Heart left ventricle (tissue), 16 donors: ENCODE measurements at regions of chr14 and their contacts with region 1.

Region 1: DNA sequence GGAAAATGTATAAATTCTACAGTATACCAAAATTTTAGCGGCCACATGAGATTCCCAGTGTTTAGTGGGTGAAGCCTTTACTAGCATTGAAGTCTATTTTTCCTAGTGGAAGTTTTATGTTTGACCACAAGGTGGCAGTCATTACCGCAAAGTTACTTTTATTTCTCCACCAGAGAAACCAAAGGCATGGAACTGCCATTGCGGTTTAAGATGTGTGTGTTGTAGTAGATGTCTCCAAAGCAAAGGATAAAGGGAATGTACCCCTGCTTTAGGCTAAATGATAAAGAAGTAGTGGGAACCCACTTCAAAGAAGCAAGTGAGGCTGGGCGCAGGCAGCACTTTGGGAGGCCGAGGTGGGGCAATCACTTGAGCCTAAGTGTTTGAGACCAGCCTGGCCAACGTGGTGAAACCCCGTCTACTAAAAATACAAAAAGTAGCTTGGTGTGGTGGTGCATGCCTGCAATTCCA is 140.5 kb downstream of the PRKCH start:
- DNase-seq: no peak
- ATAC-seq: peak; percentile 27 to 49 (median 38)
- H3K4me3 ChIP-seq: no peak overlapping the region
- H3K27ac ChIP-seq: peak overlapping the region in 4 of 12 donors; percentile 32 to 65 (median 40)
- H3K4me1 ChIP-seq: peaks cover 0 to 36% (median 27%) of the 10 kb centered on the region in 12 donors
- H3K27me3 ChIP-seq: no peaks in the 10 kb centered on the region
- CTCF ChIP-seq: peak; percentile 65 to 90 (median 81)
- POLR2A ChIP-seq: no peak

Region 2: DNA sequence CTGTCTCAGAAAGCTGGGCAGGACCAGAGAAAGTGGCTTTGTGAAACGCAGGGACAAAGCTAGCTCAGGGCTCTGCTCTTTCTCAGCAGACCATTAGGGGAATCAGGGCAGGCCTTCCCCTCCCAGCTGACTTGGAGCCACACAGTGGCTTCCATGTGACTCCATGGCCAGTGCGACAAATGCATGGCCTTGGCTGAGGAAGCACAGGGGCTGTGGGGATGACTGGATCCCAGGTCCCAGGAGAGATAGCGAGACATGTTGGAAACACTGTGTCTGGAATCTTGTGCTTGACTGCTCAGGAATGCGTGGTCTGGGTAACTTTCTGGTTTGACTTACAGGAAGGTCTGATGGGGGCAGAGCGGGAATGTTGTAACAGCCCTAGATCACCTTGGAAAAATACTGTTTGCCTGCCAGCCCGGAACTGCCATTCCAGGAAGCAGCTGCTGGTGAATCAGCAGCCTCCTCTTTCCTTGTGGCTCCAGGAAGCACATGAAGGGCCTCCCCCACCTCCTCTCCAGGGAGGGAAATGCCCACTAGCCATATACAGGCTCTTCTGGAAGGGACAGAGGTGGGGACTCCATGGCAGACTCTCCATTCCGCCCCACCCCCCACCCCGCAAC is 99.9 kb after region 1 on chr14:
- intact Hi-C with region 1: no loop called
- DNase-seq: peak; percentile 66 to 87 (median 73)
- ATAC-seq: peak; percentile 52 to 90 (median 80)
- H3K4me3 ChIP-seq: no peak overlapping the region
- H3K27ac ChIP-seq: peak overlapping the region; percentile 31 to 94 (median 76)
- H3K4me1 ChIP-seq: peaks cover 2 to 67% (median 32%) of the 10 kb centered on the region in 12 donors
- H3K27me3 ChIP-seq: no peaks in the 10 kb centered on the region
- CTCF ChIP-seq: peak in 1 of 12 donors; percentile 7
- POLR2A ChIP-seq: no peak

Region 3: DNA sequence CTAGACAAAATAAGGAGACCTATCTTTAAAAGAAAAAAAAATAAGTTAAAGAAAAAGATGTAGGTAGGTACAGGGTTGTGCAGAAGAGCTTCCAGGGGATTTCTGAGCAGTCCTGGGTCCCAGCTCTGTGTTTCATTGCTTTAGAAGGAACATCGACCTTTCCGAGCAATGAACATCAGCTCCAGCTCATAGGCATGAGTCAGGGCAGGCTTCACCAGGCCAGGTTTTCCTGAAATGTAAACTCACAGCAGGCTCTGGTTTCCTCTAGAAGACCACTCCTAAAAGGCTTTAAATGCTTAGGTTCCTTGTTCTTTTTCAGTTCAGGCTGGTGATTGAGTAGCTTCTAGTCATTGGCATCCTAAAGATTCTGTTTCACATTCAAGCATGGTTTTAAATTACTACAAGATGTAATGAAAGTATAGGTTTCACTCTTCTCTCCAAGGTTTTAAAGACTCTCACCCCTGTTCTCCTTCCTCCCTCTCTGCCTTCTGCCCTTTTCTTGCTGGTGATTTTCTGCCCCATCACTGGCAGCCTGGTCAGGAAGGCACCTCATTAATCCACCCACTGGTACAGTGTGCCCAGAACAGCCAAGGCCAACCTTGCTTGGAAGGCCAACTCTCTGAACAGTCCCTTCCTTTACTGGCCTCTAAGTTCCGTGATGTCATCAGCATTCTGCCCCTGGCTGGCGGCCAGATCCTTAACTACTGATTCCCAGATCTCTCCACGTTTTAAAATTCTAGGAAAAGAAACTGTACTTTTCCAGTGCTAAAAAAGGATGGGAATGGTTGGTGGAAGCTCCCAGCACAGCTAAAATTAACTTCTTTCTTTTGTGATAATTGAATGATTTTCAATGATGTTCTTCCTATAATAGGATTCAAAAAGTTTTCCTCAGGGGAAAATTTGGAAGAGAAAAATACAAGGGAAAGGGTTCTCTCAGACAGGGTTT is 124.0 kb after region 1 on chr14:
- intact Hi-C with region 1: loop called in 1 of 10 experiments (anchors 5 kb)
- DNase-seq: peak; percentile 78 to 84 (median 81)
- ATAC-seq: peak; percentile 83 to 89 (median 86)
- H3K4me3 ChIP-seq: no peak overlapping the region
- H3K27ac ChIP-seq: peak overlapping the region; percentile 49 to 88 (median 65)
- H3K4me1 ChIP-seq: peaks cover 8 to 71% (median 32%) of the 10 kb centered on the region in 12 donors
- H3K27me3 ChIP-seq: no peaks in the 10 kb centered on the region
- CTCF ChIP-seq: no peak
- POLR2A ChIP-seq: no peak

Region 4: DNA sequence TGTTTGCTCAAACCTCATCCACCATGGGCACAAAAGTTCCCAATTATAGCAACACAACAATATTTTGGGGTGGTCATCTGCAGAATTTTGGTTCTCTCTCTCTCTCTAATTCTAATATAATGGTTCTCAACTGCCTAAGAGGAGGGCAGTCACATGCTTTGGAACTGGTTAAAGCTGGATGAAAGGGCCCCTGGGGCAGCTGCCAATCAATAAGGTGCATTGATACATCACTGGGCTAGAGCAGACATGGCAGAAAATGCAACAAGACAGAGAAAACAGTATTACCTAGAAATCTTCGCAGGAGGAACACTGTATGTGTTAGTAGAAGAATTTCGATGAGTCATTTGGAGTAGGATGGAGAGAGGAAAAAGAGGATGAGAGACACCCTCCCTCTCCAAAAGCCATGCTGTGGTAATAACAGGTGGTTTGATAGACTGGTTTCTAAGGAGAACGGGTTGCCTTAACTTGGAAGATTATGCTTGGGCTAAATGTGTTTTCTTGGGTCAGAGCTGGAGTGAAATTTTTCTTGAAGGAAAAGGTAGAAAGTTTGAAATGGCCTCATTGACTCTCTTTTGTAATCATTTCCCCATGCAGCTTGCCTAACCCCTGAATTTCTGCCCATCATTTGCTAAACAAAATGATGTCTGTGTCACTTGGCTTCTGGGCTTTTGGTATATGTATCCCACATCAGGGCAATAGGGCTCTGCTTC is 166.3 kb after region 1 on chr14:
- intact Hi-C with region 1: no loop called
- DNase-seq: no peak
- ATAC-seq: no peak
- H3K4me3 ChIP-seq: no peak overlapping the region
- H3K27ac ChIP-seq: no peak overlapping the region
- H3K4me1 ChIP-seq: no peaks in the 10 kb centered on the region
- H3K27me3 ChIP-seq: no peaks in the 10 kb centered on the region
- CTCF ChIP-seq: no peak
- POLR2A ChIP-seq: no peak

Region 5: DNA sequence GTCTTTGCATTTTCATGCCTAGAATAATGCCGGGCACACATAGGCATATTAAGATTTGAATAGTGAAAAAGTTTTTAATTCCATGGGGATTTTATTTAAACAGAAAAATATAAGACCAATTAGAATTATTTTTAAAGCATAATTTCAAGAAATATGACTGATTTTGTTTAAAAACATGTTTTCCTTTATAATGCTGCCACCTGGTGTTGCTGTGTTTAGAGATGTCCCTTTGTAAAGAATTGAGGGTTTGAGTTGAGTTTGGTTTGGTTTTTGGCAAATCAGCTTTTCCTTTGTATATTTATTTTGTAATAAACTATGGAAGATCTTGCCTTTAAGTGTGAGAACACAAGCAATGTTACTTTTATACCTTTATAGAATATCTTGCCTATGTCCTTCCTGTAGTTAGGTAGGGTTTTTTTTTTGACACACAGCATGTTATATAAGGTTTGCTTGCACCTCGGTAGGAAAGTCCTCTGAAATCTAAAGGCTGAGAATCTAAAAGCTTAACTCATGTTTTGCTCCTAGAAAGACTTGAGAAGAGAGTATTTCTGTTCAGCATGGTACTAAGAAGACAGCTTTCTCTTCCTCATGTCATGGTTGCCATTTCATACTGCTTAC is 269.0 kb after region 1 on chr14:
- intact Hi-C with region 1: loop called (anchors 2 to 5 kb)
- DNase-seq: no peak
- ATAC-seq: no peak
- H3K4me3 ChIP-seq: no peak overlapping the region
- H3K27ac ChIP-seq: peak overlapping the region in 3 of 12 donors; percentile 18 to 44 (median 25)
- H3K4me1 ChIP-seq: peaks cover 0 to 26% (median 8%) of the 10 kb centered on the region in 12 donors
- H3K27me3 ChIP-seq: no peaks in the 10 kb centered on the region
- CTCF ChIP-seq: peak in 11 of 12 donors; percentile 26 to 71 (median 55)
- POLR2A ChIP-seq: no peak

Region 6: DNA sequence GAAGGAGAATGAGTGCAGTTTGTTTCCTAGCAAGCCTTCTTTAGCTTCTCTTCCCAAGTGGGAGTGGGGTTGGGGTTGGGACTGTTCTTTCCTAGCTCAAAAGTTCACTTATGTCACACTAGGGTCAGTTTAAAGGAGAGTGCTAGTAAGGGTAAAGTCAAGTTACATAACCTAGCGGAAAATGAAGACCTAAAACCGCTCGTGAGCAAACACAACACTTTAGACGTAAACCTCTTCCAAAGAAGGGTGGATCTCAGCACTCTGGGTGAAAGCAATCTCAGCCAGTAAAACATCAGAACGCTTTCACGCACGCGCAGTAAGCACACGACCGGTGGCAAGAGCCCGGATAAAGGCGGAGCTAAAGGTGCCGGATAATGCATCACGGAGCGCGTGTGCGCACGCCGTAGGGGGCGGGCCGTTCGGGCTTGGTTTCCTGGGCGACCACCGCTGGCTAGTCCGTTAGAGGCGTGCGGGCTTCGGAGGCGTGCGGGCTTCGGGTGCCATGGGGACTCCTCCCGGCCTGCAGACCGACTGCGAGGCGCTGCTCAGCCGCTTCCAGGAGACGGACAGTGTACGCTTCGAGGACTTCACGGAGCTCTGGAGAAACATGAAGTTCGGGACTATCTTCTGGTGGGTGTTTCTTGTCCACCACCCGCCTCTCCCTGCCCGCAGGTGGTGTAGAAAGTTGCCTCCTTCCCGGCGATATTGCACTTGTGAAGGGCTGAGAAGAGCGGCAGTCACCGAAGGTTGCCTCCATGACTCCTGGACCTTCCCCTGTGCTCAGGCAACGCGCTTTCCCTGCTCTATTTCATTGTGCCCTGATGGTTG is 300.3 kb after region 1 on chr14 and contains the start of gene SNAPC1:
- intact Hi-C with region 1: loop called in 4 of 10 experiments (anchors 2 to 10 kb)
- DNase-seq: peak; percentile 97 to 99 (median 98)
- ATAC-seq: peak; percentile 99 to 100 (median 99)
- H3K4me3 ChIP-seq: peak within 1 kb of the TSS; percentile 29 to 90 (median 80)
- H3K27ac ChIP-seq: peak within 1 kb of the TSS; percentile 78 to 97 (median 93)
- H3K4me1 ChIP-seq: peaks cover 0 to 39% (median 18%) of the 10 kb centered on the region in 12 donors
- H3K27me3 ChIP-seq: no peaks in the 10 kb centered on the region
- CTCF ChIP-seq: no peak
- POLR2A ChIP-seq: peak; percentile 77 to 92
- total RNA-seq, gene SNAPC1: 5.9 to 9.0 (median 7.2) TPM